Esophagus squamous epithelium (tissue), 5 donors: ENCODE measurements at regions of chr14 and their contacts with region 1.

Region 1: GRCh38 chr14:28751467-28752058 is 15.0 kb upstream of the FOXG1 start:
- DNase-seq: no peak
- H3K4me3 ChIP-seq: no peak overlapping the region
- H3K27ac ChIP-seq: no peak overlapping the region
- H3K4me1 ChIP-seq: no peaks in the 10 kb centered on the region
- H3K27me3 ChIP-seq: peaks cover 0 to 67% (median 12%) of the 10 kb centered on the region in 4 donors
- CTCF ChIP-seq: peak in 5 of 6 experiments; percentile 20 to 52 (median 24)
- POLR2A ChIP-seq: no peak

Region 2: GRCh38 chr14:28676479-28676878 is 75.1 kb before region 1 on chr14:
- intact Hi-C with region 1: no loop called
- DNase-seq: no peak
- H3K4me3 ChIP-seq: no peak overlapping the region
- H3K27ac ChIP-seq: peak overlapping the region in 1 of 4 donors; percentile 28
- H3K4me1 ChIP-seq: peaks cover 0 to 10% (median 0%) of the 10 kb centered on the region in 3 donors
- H3K27me3 ChIP-seq: no peaks in the 10 kb centered on the region
- CTCF ChIP-seq: peak in 1 of 6 experiments; percentile 23
- POLR2A ChIP-seq: no peak

Region 3: DNA sequence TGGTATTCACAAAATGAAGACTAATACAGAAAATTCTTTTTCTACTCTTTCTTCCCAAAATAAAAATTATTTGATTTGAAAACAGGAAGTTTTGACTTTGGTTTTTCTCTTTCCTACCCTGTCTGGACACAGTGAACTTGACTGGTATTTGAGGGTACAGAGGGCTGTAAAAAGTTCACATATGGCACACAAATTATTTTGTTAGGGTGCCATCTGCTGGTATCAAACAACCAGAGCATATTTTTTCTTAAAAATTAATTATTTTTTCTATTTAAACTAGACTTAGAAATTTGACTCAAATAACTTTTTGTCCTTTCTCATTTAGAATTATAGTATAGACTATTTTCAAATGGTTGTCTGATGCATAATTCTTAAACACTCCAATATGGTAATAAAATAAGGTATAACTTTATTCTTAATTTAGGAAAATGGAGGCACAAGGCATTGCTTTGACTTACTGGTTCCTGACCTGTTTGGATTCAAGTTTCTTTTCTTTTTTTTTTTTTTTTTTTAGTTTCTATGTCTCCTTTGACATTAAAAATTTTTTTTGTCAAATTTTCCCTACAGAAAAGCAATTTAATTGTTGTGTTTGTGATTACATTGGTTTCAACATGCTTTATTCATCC is 785.4 kb after region 1 on chr14:
- intact Hi-C with region 1: loop called (anchors 10 kb)
- DNase-seq: no peak
- H3K4me3 ChIP-seq: no peak overlapping the region
- H3K27ac ChIP-seq: no peak overlapping the region
- H3K4me1 ChIP-seq: no peaks in the 10 kb centered on the region
- H3K27me3 ChIP-seq: no peaks in the 10 kb centered on the region
- CTCF ChIP-seq: peak in 2 of 6 experiments; percentile 35 to 36
- POLR2A ChIP-seq: no peak